B cell (primary cell): ENCODE measurements at regions of chr1 and their contacts with region 1.

Region 1: DNA sequence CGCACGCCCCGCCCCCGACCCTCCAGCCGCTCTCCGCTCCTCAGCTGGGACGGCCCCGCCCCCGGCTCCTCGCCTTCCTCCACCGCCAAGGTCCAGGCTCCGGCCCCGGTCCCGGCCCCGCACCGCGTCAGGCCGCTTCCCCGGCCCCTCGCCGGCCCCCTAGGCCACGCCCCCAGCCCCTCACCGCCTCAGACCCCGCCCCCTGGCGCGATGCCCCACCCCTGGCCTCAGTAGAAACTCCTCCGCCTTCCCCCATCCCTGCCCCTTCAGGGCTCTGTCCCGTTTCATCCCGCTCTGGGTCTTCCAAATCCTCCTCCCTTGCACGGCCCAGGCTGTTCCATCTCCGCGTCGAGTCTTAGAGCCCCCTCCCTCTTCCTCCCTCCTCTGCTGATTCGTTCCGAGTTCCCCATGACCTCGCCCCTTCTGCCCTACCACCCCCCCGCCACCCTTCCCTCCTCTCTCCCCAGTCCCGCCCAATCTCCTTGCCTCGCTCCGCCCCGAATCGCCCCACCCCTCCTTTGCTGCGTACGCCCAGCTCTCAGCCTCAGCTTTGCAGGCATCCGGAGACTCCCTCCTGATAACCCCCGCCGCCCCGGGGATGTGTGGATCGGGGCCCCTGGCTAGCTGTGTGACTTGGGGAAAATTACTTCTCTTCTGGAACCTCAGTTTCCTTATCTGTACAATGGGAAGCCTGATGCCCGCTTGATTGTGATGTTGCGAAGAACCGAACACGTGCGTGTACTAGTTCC is 448 bp upstream of the ASAP3 start:
- DNase-seq: peak; percentile 94
- ATAC-seq: peak; percentile 85
- H3K4me3 ChIP-seq: peak overlapping the region in 4 of 5 experiments; percentile 43 to 79 (median 66)
- H3K4me3 Mint-ChIP-seq: peak overlapping the region; percentile 90
- H3K27ac ChIP-seq: no peak overlapping the region
- H3K27ac Mint-ChIP-seq: peak overlapping the region; percentile 82
- H3K4me1 ChIP-seq: peaks cover 14 to 23% of the 10 kb centered on the region in 2 donors
- H3K4me1 Mint-ChIP-seq: peaks cover 29% of the 10 kb centered on the region
- H3K27me3 ChIP-seq: peaks cover 0 to 22% (median 8%) of the 10 kb centered on the region in 4 experiments
- H3K27me3 Mint-ChIP-seq: peaks cover 25% of the 10 kb centered on the region
- CTCF ChIP-seq: peak; percentile 2

Region 2: DNA sequence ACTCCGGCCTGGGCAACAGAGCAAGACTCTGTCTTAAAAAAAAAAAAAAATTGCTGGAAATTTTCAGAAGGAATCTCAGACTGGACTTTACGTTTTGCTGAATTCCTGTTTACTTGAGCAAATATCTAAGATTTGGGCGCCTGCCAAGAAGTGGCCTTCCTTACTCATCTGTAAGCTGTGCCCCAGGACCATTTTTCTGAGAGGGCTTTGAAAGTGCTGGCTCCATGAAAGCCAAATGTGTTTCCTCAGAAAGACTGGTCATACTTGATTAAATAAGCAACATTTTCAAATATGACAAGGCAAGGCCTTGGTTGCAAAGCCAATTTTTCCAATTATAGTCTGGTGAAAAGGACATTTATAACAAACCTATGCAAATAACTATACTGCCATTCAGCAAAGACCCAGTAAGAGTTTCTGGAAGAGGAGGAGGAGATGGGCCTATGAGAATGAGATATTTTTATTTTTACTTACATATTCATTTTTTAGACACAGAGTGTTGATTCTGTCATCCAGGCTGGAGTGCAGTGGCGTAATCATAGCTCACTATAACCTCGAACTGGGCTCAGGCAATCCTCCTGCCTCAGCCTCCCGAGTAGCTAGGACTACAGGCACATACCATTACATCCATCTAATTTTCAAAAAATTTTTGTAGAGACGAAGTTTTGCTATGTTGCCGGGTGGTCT is 210.8 kb before region 1 on chr1:
- CTCF ChIA-PET with region 1: no interaction called
- POLR2A ChIA-PET with region 1: no interaction called
- intact Hi-C with region 1: no loop called
- DNase-seq: no peak
- ATAC-seq: no peak
- H3K4me3 ChIP-seq: no peak overlapping the region
- H3K4me3 Mint-ChIP-seq: no peak overlapping the region
- H3K27ac ChIP-seq: no peak overlapping the region
- H3K27ac Mint-ChIP-seq: no peak overlapping the region
- H3K4me1 ChIP-seq: no peaks in the 10 kb centered on the region
- H3K4me1 Mint-ChIP-seq: no peaks in the 10 kb centered on the region
- H3K27me3 ChIP-seq: peaks cover 0 to 13% (median 5%) of the 10 kb centered on the region in 4 experiments
- H3K27me3 Mint-ChIP-seq: peaks cover 38% of the 10 kb centered on the region
- CTCF ChIP-seq: no peak

Region 3: DNA sequence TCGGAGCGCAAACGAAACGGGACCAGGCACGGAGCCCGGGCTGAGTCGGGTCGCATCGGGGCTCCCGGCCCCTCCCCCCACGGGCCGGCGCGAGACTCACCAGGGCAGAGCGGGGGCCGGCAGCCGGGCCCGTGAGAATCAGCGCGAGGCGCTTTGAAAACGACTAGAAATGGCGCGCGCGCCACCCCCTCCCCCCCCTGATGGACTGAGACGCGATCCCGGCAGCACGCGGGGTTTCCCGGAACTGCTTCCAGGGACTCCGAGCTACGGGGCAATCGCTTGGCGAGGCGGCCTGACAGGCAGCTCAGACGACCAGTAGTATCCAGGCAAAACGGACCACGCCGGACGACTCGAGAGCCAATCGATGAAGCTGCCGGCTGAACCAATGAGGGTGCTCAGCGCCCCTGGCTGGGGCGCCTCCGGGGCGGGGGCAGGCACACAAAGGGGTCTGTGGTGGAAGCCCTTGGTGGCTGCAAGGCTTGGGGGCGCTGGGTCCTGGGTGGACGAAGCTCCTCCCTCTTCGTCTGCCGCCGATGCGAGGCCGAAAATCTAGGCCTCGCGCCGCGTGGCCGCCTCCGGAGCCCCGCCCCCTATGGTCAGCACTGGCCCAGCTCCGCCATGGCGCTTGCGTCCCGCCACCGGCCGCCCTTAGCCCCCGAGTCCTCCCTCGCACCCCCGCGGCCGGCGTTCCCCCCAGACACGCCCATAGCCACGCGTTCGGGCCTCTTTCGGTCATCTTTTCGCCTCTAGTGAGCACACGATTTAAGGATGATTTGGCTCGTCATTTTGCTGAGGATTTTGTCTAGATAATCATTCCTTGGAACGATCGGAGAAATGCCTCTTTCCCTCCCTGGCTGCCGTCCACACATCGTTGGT is 140.1 kb before region 1 on chr1 and contains the start of gene HNRNPR:
- CTCF ChIA-PET with region 1: no interaction called
- POLR2A ChIA-PET with region 1: no interaction called
- intact Hi-C with region 1: loop called (anchors 1 kb)
- DNase-seq: peak; percentile 99
- ATAC-seq: peak; percentile 94
- H3K4me3 ChIP-seq: peak within 1 kb of the TSS; percentile 78 to 92 (median 87)
- H3K4me3 Mint-ChIP-seq: peak within 1 kb of the TSS; percentile 96
- H3K27ac ChIP-seq: peak within 1 kb of the TSS; percentile 65 to 92
- H3K27ac Mint-ChIP-seq: peak within 1 kb of the TSS; percentile 97
- H3K4me1 ChIP-seq: peaks cover 24 to 40% of the 10 kb centered on the region in 2 donors
- H3K4me1 Mint-ChIP-seq: peaks cover 41% of the 10 kb centered on the region
- H3K27me3 ChIP-seq: no peaks in the 10 kb centered on the region
- H3K27me3 Mint-ChIP-seq: no peaks in the 10 kb centered on the region
- CTCF ChIP-seq: peak; percentile 10
- total RNA-seq, gene HNRNPR: 132 and 142 TPM in 2 replicates

Region 4: DNA sequence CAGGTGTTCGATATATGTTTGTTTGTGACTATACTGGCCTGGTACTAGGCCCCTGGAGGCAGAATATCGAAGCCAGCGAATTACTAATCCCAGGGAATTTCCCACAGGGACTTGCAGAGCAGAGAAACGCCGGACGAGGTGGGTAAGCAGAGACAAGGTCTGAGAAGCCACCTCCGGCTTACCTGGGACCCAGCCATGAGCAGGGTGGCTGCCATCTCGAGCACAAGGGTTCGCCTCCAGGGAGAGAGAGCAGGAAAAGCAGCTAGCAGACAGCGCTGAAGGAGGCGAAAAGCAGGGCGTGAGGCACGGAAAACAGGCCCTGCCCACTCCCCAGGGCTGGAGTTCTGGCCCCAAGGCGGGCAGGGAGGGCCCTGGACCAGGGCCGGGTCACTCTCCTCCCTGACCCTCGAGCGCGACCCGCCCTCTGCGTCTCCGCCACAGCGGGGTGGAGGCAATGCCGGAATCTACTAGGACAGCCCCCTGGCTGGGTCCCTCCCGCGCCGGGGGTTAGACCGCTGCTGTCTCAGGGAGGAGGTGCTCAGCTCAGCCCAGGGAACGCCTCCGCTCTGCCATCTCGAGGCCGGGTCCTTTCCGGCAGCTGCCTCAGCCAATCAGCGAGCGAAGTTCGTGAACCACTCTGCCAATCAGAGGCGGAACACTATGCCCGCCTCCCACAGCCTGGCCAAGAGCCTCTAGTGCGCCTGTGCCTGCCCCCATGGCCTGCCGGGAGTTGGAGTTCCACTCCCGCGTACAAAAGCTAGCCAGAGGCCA is 116.5 kb before region 1 on chr1:
- CTCF ChIA-PET with region 1: interaction called, 3 read pairs
- POLR2A ChIA-PET with region 1: no interaction called
- intact Hi-C with region 1: loop called (anchors 1 kb)
- DNase-seq: peak; percentile 98
- ATAC-seq: peak; percentile 87
- H3K4me3 ChIP-seq: peak overlapping the region; percentile 93 to 100 (median 97)
- H3K4me3 Mint-ChIP-seq: peak overlapping the region; percentile 98
- H3K27ac ChIP-seq: peak overlapping the region; percentile 81 to 85
- H3K27ac Mint-ChIP-seq: peak overlapping the region; percentile 99
- H3K4me1 ChIP-seq: peaks cover 12 to 19% of the 10 kb centered on the region in 2 donors
- H3K4me1 Mint-ChIP-seq: peaks cover 33% of the 10 kb centered on the region
- H3K27me3 ChIP-seq: no peaks in the 10 kb centered on the region
- H3K27me3 Mint-ChIP-seq: no peaks in the 10 kb centered on the region
- CTCF ChIP-seq: no peak

Region 5: GRCh38 chr1:23514111-23514679 is 29.8 kb after region 1 on chr1:
- CTCF ChIA-PET with region 1: no interaction called
- POLR2A ChIA-PET with region 1: no interaction called
- intact Hi-C with region 1: no loop called
- DNase-seq: no peak
- ATAC-seq: no peak
- H3K4me3 ChIP-seq: no peak overlapping the region
- H3K4me3 Mint-ChIP-seq: no peak overlapping the region
- H3K27ac ChIP-seq: no peak overlapping the region
- H3K27ac Mint-ChIP-seq: no peak overlapping the region
- H3K4me1 ChIP-seq: peaks cover 0 to 4% of the 10 kb centered on the region in 2 donors
- H3K4me1 Mint-ChIP-seq: no peaks in the 10 kb centered on the region
- H3K27me3 ChIP-seq: no peaks in the 10 kb centered on the region
- H3K27me3 Mint-ChIP-seq: no peaks in the 10 kb centered on the region
- CTCF ChIP-seq: no peak

Region 6: DNA sequence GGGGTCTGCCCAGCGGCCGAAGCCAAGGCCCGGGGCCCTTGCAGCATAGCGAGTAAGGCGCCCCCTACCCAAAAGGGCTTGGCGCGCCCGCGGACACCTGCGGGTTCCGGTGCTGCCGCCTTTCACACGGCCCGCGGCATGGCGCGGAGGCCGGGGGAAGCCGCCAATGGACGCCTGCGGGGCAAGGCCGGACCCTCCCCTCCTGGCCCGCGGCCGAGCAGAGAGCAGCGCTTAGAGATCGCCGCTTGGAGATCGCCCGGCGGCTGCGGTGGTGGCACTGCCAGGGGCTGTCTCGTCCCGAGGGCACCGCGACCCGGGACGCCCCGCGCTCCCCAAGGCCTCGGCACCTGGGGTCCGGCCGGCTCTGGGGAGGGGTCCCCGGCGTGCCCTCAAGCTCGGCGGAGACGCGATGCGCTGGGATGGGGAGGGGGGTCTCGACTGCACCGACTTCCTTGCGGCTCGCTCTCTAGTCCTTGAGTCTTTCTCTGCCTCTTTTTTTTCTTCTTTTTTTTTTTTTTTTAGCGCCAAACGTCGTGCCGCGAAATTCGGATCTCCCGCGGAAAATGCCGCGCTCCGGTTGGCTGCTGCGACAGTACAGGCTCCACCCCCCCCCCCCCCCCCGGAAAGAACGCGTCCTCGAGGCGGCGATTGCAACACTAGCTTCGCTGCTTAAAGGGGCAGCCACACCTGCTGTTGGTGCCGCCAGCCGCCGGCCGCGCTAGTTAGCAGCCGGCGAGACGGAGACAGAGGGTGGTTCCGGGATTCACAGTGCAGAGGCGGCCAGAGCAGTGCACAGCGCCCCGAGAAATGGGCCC is 46.5 kb after region 1 on chr1 and contains the start of gene E2F2:
- CTCF ChIA-PET with region 1: interaction called, 3 read pairs
- POLR2A ChIA-PET with region 1: interaction called, 9 read pairs
- intact Hi-C with region 1: loop called (anchors 2 kb)
- DNase-seq: peak; percentile 91
- ATAC-seq: peak; percentile 83
- H3K4me3 ChIP-seq: peak within 1 kb of the TSS; percentile 40 to 71 (median 63)
- H3K4me3 Mint-ChIP-seq: peak within 1 kb of the TSS; percentile 85
- H3K27ac ChIP-seq: no peak within 1 kb of the TSS
- H3K27ac Mint-ChIP-seq: peak within 1 kb of the TSS; percentile 61
- H3K4me1 ChIP-seq: peaks cover 69 to 75% of the 10 kb centered on the region in 2 donors
- H3K4me1 Mint-ChIP-seq: peaks cover 79% of the 10 kb centered on the region
- H3K27me3 ChIP-seq: peaks cover 0 to 7% (median 0%) of the 10 kb centered on the region in 4 experiments
- H3K27me3 Mint-ChIP-seq: no peaks in the 10 kb centered on the region
- CTCF ChIP-seq: no peak
- total RNA-seq, gene E2F2: 1.2 and 3.2 TPM in 2 replicates

Region 7: GRCh38 chr1:23699280-23700179 is 215.1 kb after region 1 on chr1:
- CTCF ChIA-PET with region 1: no interaction called
- POLR2A ChIA-PET with region 1: no interaction called
- intact Hi-C with region 1: no loop called
- DNase-seq: no peak
- ATAC-seq: peak; percentile 49
- H3K4me3 ChIP-seq: no peak overlapping the region
- H3K4me3 Mint-ChIP-seq: no peak overlapping the region
- H3K27ac ChIP-seq: no peak overlapping the region
- H3K27ac Mint-ChIP-seq: peak overlapping the region; percentile 56
- H3K4me1 ChIP-seq: no peaks in the 10 kb centered on the region
- H3K4me1 Mint-ChIP-seq: peaks cover 32% of the 10 kb centered on the region
- H3K27me3 ChIP-seq: no peaks in the 10 kb centered on the region
- H3K27me3 Mint-ChIP-seq: no peaks in the 10 kb centered on the region
- CTCF ChIP-seq: no peak

Region 8: DNA sequence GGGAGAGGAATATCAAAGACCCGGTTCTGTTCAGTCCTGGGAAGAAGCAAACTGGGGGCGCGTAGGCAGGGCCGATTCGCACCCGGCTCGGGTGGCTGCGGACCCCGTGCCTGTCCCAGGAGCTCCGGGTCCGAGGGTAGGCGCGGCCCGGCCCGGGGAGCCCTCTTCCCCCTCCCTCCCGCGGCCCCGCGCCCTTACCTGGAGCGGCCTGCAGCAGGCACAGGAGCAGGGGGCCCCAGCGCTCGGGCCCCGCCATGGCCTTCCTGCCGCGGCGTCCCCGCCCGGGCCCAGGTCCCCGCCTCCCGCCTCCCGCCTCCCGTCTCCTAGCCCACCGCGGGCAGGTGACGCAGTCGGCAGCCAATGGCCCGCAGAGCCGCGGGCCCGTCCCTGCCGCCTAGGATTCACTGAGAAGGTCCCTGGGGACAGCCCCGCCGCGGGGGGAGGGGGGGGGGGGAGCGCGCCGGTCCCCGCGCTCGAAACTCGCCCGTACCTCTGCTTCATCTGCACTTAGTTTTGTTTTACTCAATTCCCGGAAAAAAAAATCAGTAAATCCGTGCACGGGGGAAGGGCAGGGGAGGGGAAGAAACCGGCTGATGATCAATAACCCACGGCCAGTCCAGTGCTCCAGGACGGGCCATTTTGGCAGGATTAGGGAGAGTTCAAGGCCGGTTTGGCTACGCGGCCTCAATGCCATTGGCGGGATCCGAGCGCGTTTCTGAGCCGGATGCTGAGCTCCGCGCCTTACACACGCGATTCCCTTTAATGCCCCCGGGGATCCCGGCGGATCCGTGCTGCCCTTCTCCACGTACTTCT is 702.8 kb after region 1 on chr1 and contains the start of gene IFNLR1:
- CTCF ChIA-PET with region 1: no interaction called
- POLR2A ChIA-PET with region 1: interaction called, 10 read pairs
- intact Hi-C with region 1: no loop called
- DNase-seq: peak; percentile 87
- ATAC-seq: peak; percentile 57
- H3K4me3 ChIP-seq: peak within 1 kb of the TSS; percentile 65 to 85 (median 77)
- H3K4me3 Mint-ChIP-seq: peak within 1 kb of the TSS; percentile 95
- H3K27ac ChIP-seq: peak within 1 kb of the TSS; percentile 82
- H3K27ac Mint-ChIP-seq: peak within 1 kb of the TSS; percentile 93
- H3K4me1 ChIP-seq: peaks cover 69 to 78% of the 10 kb centered on the region in 2 donors
- H3K4me1 Mint-ChIP-seq: peaks cover 83% of the 10 kb centered on the region
- H3K27me3 ChIP-seq: no peaks in the 10 kb centered on the region
- H3K27me3 Mint-ChIP-seq: no peaks in the 10 kb centered on the region
- CTCF ChIP-seq: no peak
- total RNA-seq, gene IFNLR1: 38.0 and 39.7 TPM in 2 replicates

Region 9: DNA sequence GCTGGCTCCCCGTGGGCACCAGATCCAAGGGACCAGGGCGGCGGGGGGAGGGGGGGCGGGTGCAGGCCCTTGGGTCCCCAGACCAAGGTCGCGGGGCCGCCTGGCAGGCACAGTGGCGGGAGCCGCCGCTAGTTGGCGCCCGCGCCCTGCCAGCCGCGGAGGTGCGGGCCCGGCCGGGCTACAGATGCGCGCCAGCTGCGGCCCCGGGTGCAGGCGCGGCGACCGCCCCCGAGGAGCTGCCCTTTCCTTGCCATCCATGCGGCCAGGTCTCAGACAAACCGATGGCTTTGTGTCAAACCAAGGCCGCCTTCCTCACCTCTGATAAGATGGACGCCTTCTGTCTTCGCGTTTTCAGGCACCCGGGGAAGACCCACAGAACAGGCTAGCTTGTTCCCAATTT is 1447.9 kb after region 1 on chr1:
- CTCF ChIA-PET with region 1: no interaction called
- POLR2A ChIA-PET with region 1: no interaction called
- intact Hi-C with region 1: no loop called
- DNase-seq: peak; percentile 77
- ATAC-seq: peak; percentile 8
- H3K4me3 ChIP-seq: peak overlapping the region in 3 of 5 experiments; percentile 11 to 30 (median 29)
- H3K4me3 Mint-ChIP-seq: peak overlapping the region; percentile 70
- H3K27ac ChIP-seq: no peak overlapping the region
- H3K27ac Mint-ChIP-seq: no peak overlapping the region
- H3K4me1 ChIP-seq: peaks cover 48 to 66% of the 10 kb centered on the region in 2 donors
- H3K4me1 Mint-ChIP-seq: peaks cover 61% of the 10 kb centered on the region
- H3K27me3 ChIP-seq: no peaks in the 10 kb centered on the region
- H3K27me3 Mint-ChIP-seq: no peaks in the 10 kb centered on the region
- CTCF ChIP-seq: peak; percentile 95